Prostate gland (tissue), 2 donors: ENCODE measurements at regions of chr19 and their contacts with region 1.

Region 1: GRCh38 chr19:6297202-6297601 is 17.4 kb upstream of the MLLT1 start:
- DNase-seq: no peak
- H3K4me3 ChIP-seq: no peak overlapping the region
- H3K27ac ChIP-seq: no peak overlapping the region
- H3K4me1 ChIP-seq: no peaks in the 10 kb centered on the region
- H3K27me3 ChIP-seq: no peaks in the 10 kb centered on the region
- CTCF ChIP-seq: no peak
- POLR2A ChIP-seq: no peak

Region 2: DNA sequence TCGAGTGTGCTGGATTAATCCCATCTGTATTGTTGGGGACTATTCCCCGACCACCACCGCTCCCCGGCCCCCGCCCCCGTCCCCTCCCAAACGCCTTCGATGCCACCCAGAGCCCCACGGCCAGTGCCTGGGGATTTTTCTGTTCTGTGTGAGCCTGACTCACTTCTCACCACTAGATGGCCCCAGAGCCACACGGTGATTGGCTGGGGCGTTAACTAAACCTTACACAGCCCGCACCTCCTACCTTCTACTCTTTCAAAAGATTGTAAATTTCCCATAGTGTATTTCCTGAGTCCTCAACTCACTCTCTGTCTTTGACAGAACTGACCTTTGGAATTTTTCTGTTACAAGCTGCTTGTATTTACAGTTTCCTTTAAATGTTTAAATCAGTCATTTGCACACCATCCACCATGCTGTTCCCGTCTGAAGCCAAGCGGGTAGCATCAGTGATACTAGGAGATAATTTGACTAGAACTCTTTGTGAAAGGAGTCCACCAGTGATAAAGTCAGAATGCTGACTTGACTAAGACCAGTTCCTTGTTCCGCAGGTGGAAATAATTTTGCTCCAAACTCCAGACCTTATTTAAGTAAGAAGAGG is 248.3 kb before region 1 on chr19:
- intact Hi-C with region 1: loop called (anchors 5 kb)
- DNase-seq: peak; percentile 70
- H3K4me3 ChIP-seq: no peak overlapping the region
- H3K27ac ChIP-seq: no peak overlapping the region
- H3K4me1 ChIP-seq: no peaks in the 10 kb centered on the region
- H3K27me3 ChIP-seq: no peaks in the 10 kb centered on the region
- CTCF ChIP-seq: peak; percentile 56 to 88 (median 82)
- POLR2A ChIP-seq: no peak